K562 (cell line): ENCODE measurements at regions of chr16 and their contacts with region 1.

Region 1: GRCh38 chr16:2883027-2883851 is at the start of gene FLYWCH2:
- DNase-seq: peak; percentile 94 to 97 (median 96)
- ATAC-seq: peak; percentile 93
- H3K4me3 ChIP-seq: peak within 1 kb of the TSS; percentile 60
- H3K27ac ChIP-seq: peak within 1 kb of the TSS; percentile 77
- H3K4me1 ChIP-seq: peaks cover 0 to 26% of the 10 kb centered on the region in 2 experiments; a peak in 3 of 5 replicates
- H3K27me3 ChIP-seq: no peaks in the 10 kb centered on the region
- CTCF ChIP-seq: no peak
- EP300 ChIP-seq: no peak
- POLR2A ChIP-seq: peak; percentile 84
- RAD21 ChIP-seq: no peak
- polyA plus RNA-seq, gene FLYWCH2: 0.70 to 1.4 TPM

Region 2: DNA sequence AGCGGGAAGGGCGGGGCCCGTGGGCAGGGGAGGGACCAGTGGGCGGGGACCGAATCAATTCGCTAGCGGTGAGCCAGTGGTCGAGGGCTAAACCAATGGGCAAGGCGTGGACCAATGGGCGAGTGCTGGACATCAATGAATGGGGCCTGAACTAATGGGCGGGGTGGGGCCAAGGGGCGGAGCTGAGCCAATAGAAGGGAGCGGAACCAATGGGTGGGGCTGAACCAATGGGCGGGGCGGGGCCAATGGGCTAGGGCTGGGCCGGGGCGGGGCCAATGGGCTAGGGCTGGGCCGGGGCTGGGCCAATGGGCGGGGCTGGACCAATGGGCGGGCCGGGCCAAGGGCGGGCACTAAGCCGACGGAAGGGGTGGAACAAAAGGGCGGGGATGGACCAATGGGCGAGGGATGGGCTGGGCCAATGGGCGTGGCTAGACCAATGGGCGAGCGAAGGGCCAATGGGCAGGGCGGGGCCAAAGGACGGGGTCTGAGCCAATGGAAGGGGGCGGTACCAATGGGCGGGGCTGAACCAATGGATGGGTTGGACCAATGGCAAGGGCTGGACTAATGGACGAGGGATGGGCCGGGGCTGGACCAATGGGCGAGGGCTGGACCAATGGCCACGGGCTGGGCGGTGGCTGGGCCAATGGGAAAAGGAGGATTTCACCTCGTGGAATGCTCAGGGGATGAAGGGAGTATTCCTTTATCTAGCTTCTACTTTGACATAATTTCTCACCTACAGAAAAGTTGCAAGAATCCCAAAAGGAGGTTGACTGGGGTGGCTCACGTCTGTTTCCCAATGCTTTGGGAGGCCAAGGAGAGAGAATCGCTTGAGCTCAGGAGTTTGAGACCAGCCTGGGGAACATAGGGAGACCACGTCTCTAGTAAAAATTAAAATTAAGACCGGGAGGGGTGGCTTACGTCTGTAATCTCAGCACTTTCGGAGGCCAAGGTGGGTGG is 22.5 kb after region 1 on chr16:
- CTCF ChIA-PET with region 1: no interaction called
- POLR2A ChIA-PET with region 1: interaction called, 10 read pairs
- in situ Hi-C with region 1: no loop called
- intact Hi-C with region 1: loop called (anchors 2 kb)
- DNase-seq: peak; percentile 96 to 99 (median 98)
- ATAC-seq: peak; percentile 90
- H3K4me3 ChIP-seq: peak overlapping the region; percentile 99
- H3K27ac ChIP-seq: peak overlapping the region; percentile 94
- H3K4me1 ChIP-seq: peaks cover 14 to 33% of the 10 kb centered on the region in 2 experiments; a peak in 4 of 5 replicates
- H3K27me3 ChIP-seq: no peaks in the 10 kb centered on the region
- CTCF ChIP-seq: no peak
- EP300 ChIP-seq: no peak
- POLR2A ChIP-seq: no peak
- RAD21 ChIP-seq: no peak

Region 3: DNA sequence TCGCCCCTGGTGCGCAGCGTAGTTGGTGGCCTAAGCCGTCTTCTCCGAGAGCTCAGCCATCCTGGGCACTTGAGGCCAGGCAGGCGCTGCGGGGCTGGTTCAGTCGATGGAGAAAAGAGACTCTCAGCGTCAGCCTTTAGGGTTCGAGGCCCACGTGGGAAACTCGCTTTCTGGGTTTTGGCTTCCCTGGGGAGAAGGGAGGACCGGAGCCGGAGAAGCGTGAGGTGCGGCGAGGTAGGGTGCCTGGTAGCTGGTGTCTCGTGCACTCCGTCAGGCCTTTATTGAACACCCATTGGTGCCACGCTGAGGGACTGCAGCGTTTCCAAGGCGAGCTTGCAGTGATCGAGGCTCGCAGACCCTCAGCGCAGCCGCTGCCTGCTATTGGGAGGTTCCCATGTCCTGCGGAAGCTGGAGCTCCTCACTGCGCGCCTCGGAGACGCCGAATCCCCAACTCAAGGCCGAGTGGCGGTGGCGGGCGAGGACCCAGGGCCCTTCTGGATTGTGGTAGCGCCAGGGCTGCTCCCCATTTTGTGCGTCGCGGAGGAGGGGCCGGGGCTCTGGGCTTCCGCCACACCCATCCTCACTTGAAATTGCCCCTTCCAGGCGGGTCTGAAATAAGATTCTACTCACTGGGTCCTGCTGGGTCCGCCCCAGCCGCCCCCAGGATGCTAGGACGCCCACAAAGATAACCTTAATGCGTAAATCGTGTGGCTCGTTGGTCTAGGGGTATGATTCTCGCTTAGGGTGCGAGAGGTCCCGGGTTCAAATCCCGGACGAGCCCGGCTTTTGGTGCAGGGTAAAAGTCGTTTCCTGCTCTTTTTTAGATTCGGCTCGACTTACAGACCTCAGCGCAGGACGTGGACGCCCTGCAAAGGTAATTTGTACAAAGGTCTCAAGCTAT is 305.9 kb after region 1 on chr16:
- CTCF ChIA-PET with region 1: no interaction called
- POLR2A ChIA-PET with region 1: no interaction called
- in situ Hi-C with region 1: no loop called
- intact Hi-C with region 1: no loop called
- DNase-seq: peak; percentile 74 to 85 (median 77)
- ATAC-seq: peak; percentile 67
- H3K4me3 ChIP-seq: peak overlapping the region; percentile 55
- H3K27ac ChIP-seq: peak overlapping the region; percentile 70; the same call in 2 of the 3 replicates
- H3K4me1 ChIP-seq: peaks cover 23 to 55% of the 10 kb centered on the region in 2 experiments
- H3K27me3 ChIP-seq: no peaks in the 10 kb centered on the region
- CTCF ChIP-seq: no peak
- EP300 ChIP-seq: no peak; the same call in 1 of the 2 replicates
- POLR2A ChIP-seq: peak; percentile 54
- RAD21 ChIP-seq: no peak